ENCODE measurements at regions of chr3 and their contacts with region 1.

Region 1: DNA sequence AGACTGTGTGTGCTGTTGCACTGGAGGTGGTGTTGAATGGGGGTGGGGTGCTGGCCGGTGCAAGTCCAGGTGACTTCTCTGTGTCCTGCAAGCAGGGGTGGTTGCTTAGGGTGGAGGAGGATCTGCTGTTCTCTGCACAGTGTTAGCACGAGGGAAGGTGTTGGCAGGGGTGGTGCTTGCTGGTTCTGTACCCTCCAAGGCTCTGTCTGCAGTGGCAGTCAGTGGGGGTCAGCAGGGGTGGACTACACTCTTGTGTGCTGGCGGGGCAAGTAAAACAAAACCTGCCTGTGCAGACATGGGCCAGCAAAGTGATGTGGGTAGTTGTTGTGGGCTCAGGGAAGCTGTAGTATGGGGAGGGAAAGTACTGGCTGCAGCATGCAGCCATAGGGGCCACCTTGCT is 5.5 kb downstream of the ROPN1 start:
- DNase-seq: no peak
- ATAC-seq: no peak
- H3K4me3 ChIP-seq: no peak overlapping the region
- H3K27ac ChIP-seq: no peak overlapping the region
- H3K4me1 ChIP-seq: no peaks in the 10 kb centered on the region
- H3K27me3 ChIP-seq: peaks cover 0 to 8% of the 10 kb centered on the region in 2 experiments; a peak in 3 of 4 replicates
- CTCF ChIP-seq: no peak
- EP300 ChIP-seq: no peak
- POLR2A ChIP-seq: no peak
- RAD21 ChIP-seq: no peak

Region 2: DNA sequence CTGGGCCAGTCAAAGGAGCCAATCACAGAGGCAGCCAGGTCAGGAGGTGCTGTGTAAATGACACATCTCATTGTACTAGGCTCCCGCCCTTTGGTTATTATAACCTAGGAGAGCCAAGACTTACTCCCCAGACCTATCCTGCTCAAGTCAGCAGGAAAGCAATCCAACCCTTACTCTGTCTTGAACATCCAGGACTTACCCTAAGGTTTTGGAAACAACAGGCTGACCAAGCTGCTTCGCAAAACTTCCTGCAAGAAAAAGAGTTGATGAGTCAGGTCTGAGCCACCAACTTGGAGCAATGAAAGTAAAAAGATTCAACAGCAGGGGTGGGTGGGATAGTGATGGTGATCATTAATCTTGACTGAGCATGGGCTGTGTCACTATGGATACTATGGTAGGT is 246.7 kb before region 1 on chr3:
- CTCF ChIA-PET with region 1: no interaction called
- POLR2A ChIA-PET with region 1: no interaction called
- RAD21 ChIA-PET with region 1: no interaction called
- SMC1A ChIA-PET with region 1: no interaction called
- in situ Hi-C with region 1: no loop called
- intact Hi-C with region 1: loop called (anchors 5 kb)
- DNase-seq: no peak
- ATAC-seq: no peak
- H3K4me3 ChIP-seq: no peak overlapping the region
- H3K27ac ChIP-seq: no peak overlapping the region
- H3K4me1 ChIP-seq: no peaks in the 10 kb centered on the region
- H3K27me3 ChIP-seq: peaks cover 0 to 1% of the 10 kb centered on the region in 2 experiments; a peak in 1 of 4 replicates
- CTCF ChIP-seq: no peak
- EP300 ChIP-seq: no peak
- POLR2A ChIP-seq: no peak
- RAD21 ChIP-seq: no peak

Region 3: DNA sequence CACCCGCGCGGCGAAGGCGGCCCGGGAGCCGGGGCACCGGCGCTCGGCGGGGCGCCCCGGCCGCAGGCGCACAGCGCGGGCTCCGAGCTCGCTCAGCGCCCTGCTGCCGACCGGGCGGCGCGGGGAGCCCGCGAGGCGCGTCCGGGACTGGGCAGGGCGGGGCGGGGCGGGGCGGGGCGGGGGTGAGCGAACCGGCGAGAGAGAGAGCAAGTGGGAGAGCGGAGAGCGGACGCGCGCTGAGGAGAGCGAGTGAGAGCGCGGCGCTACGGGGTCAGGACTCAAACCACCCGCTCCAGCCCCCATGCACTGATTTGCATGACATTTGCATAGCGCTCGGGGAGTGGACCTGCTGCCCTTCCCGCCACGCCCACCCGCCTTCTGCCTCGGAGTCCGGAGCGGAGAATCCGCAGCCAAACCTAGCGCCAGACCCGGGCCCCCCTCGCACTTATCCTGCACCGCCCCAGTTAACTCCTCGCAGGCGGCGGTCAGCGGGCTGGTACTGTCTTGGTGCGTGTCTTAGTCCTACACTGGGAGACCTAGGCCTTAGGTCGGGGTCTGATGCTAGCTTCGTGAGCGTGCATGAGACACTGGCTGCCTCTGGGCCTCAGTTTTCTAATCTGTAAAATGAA is 102.1 kb before region 1 on chr3 and contains the start of gene MYLK:
- CTCF ChIA-PET with region 1: no interaction called
- POLR2A ChIA-PET with region 1: no interaction called
- RAD21 ChIA-PET with region 1: no interaction called
- SMC1A ChIA-PET with region 1: no interaction called
- in situ Hi-C with region 1: no loop called
- intact Hi-C with region 1: loop called (anchors 5 kb)
- DNase-seq: no peak
- ATAC-seq: peak; percentile 94
- H3K4me3 ChIP-seq: peak within 1 kb of the TSS; percentile 63
- H3K27ac ChIP-seq: no peak within 1 kb of the TSS
- H3K4me1 ChIP-seq: no peaks in the 10 kb centered on the region
- H3K27me3 ChIP-seq: peaks cover 1 to 7% of the 10 kb centered on the region in 2 experiments; a peak in 3 of 4 replicates
- CTCF ChIP-seq: no peak
- EP300 ChIP-seq: no peak
- POLR2A ChIP-seq: no peak
- RAD21 ChIP-seq: no peak
- polyA plus RNA-seq, gene MYLK: 0.40 to 0.42 TPM

Region 4: GRCh38 chr3:123930445-123930844 is 56.0 kb before region 1 on chr3:
- CTCF ChIA-PET with region 1: no interaction called
- POLR2A ChIA-PET with region 1: no interaction called
- RAD21 ChIA-PET with region 1: no interaction called
- SMC1A ChIA-PET with region 1: no interaction called
- in situ Hi-C with region 1: no loop called
- intact Hi-C with region 1: no loop called
- DNase-seq: no peak
- ATAC-seq: no peak
- H3K4me3 ChIP-seq: no peak overlapping the region
- H3K27ac ChIP-seq: no peak overlapping the region
- H3K4me1 ChIP-seq: no peaks in the 10 kb centered on the region
- H3K27me3 ChIP-seq: no peaks in the 10 kb centered on the region
- CTCF ChIP-seq: no peak
- EP300 ChIP-seq: no peak
- POLR2A ChIP-seq: no peak
- RAD21 ChIP-seq: no peak

Region 5: GRCh38 chr3:124429129-124429815 is 442.8 kb after region 1 on chr3:
- CTCF ChIA-PET with region 1: no interaction called
- POLR2A ChIA-PET with region 1: no interaction called
- RAD21 ChIA-PET with region 1: no interaction called
- SMC1A ChIA-PET with region 1: no interaction called
- in situ Hi-C with region 1: no loop called
- intact Hi-C with region 1: no loop called
- DNase-seq: no peak
- ATAC-seq: no peak
- H3K4me3 ChIP-seq: no peak overlapping the region
- H3K27ac ChIP-seq: no peak overlapping the region
- H3K4me1 ChIP-seq: no peaks in the 10 kb centered on the region
- H3K27me3 ChIP-seq: no peaks in the 10 kb centered on the region; a peak in 1 of 4 replicates
- CTCF ChIP-seq: no peak
- EP300 ChIP-seq: no peak
- POLR2A ChIP-seq: no peak
- RAD21 ChIP-seq: no peak

Region 6: GRCh38 chr3:124887177-124887931 is 900.9 kb after region 1 on chr3 and contains the start of gene ITGB5:
- CTCF ChIA-PET with region 1: no interaction called
- POLR2A ChIA-PET with region 1: no interaction called
- RAD21 ChIA-PET with region 1: no interaction called
- SMC1A ChIA-PET with region 1: no interaction called
- in situ Hi-C with region 1: no loop called
- intact Hi-C with region 1: no loop called
- DNase-seq: no peak
- ATAC-seq: peak; percentile 81
- H3K4me3 ChIP-seq: peak within 1 kb of the TSS; percentile 84
- H3K27ac ChIP-seq: no peak within 1 kb of the TSS
- H3K4me1 ChIP-seq: no peaks in the 10 kb centered on the region
- H3K27me3 ChIP-seq: peaks cover 0 to 4% of the 10 kb centered on the region in 2 experiments; a peak in 3 of 4 replicates
- CTCF ChIP-seq: no peak
- EP300 ChIP-seq: no peak
- POLR2A ChIP-seq: no peak
- RAD21 ChIP-seq: no peak
- polyA plus RNA-seq, gene ITGB5: 0.05 to 0.26 TPM